A549 (cell line): ENCODE measurements at regions of chr7 and their contacts with region 1.

Region 1: GRCh38 chr7:22559829-22560489 is 60.0 kb upstream of the STEAP1B start:
- DNase-seq: peak; percentile 80 to 85
- ATAC-seq: peak; percentile 82 to 92
- H3K4me3 ChIP-seq: no peak overlapping the region
- H3K27ac ChIP-seq: peak overlapping the region in 1 of 2 experiments; percentile 74; a peak in 3 of 6 replicates
- H3K4me1 ChIP-seq: peaks cover 46% of the 10 kb centered on the region
- CTCF ChIP-seq: peak; percentile 99
- EP300 ChIP-seq: no peak
- POLR2A ChIP-seq: no peak
- RAD21 ChIP-seq: peak; percentile 90 to 99

Region 2: DNA sequence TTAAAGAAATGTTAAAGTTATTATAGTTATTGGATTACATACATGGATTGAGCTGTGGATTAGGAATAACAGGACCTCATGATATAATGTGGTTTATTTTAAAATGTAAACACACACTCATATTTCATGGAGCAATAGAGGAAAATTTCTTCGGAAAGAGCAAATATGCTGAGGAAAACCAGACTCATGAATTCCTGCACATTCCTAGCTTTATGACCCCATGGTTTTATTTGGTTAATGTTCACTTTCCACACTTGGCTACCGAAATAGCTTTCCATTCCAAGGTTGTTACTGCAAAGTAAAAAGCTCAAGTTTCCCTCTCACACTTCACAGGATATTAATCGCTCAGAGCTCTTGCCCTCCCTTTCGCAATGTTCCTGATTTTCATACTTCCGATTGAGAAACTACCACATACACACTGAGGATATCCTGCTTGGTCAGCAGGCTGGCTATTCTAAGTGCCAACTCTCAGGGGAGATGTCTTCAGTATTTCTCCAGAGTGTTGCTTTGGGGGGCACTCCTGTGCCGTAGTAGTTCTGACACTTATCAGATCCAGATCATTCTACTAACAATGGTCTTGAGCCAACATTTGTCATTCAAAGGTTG is 17.5 kb after region 1 on chr7:
- CTCF ChIA-PET with region 1: interaction called, 52 read pairs
- POLR2A ChIA-PET with region 1: interaction called, 5 read pairs
- DNase-seq: peak in 1 of 2 experiments; percentile 68
- ATAC-seq: peak; percentile 82 to 84
- H3K4me3 ChIP-seq: no peak overlapping the region
- H3K27ac ChIP-seq: peak overlapping the region; percentile 57 to 84
- H3K4me1 ChIP-seq: peaks cover 28% of the 10 kb centered on the region
- CTCF ChIP-seq: 0 out of 3 replicates have a peak, but pooled peaks have one; percentile 10
- EP300 ChIP-seq: peak; percentile 74 to 87; a peak in 3 of 5 replicates
- POLR2A ChIP-seq: no peak
- RAD21 ChIP-seq: peak in 1 of 2 experiments; percentile 41; a peak in 2 of 5 replicates

Region 3: GRCh38 chr7:22660732-22661131 is 100.8 kb after region 1 on chr7:
- CTCF ChIA-PET with region 1: interaction called, 10 read pairs
- POLR2A ChIA-PET with region 1: no interaction called
- DNase-seq: peak in 1 of 2 experiments; percentile 27
- ATAC-seq: peak; percentile 43 to 77; a peak in 4 of 6 replicates
- H3K4me3 ChIP-seq: no peak overlapping the region
- H3K27ac ChIP-seq: no peak overlapping the region
- H3K4me1 ChIP-seq: peaks cover 13% of the 10 kb centered on the region; the same call in 2 of the 3 replicates
- CTCF ChIP-seq: no peak
- EP300 ChIP-seq: no peak
- POLR2A ChIP-seq: no peak
- RAD21 ChIP-seq: peak in 1 of 2 experiments; percentile 2; a peak in 1 of 5 replicates

Region 4: DNA sequence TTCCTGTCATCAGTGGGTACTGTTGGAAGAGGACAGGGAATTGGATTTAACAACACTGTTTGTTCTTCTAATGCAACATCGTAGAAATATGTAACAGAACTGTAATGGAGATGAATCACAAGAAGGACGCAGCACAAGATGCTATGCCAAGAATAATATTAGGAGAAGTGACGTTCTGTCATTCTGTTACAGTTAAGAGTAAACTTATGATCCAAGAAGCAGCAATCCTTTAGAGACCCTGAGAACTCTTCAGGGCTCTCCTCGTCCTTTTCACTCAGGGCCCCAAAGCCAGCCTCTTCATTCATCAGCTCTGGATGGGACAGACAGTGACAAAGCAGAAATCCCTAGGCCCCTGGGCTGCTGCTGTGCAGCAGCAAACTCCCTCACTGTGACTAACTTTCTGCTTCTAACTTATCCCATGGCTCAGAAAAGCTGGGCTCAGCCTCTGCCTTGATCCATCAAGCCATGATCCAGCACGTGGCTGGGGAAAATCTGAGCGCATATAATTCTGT is 158.3 kb after region 1 on chr7:
- CTCF ChIA-PET with region 1: interaction called, 477 read pairs
- POLR2A ChIA-PET with region 1: interaction called, 3 read pairs
- DNase-seq: peak in 1 of 2 experiments; percentile 76
- ATAC-seq: peak; percentile 92 to 95
- H3K4me3 ChIP-seq: no peak overlapping the region
- H3K27ac ChIP-seq: peak overlapping the region; percentile 76 to 82
- H3K4me1 ChIP-seq: peaks cover 23% of the 10 kb centered on the region
- CTCF ChIP-seq: no peak
- EP300 ChIP-seq: peak; percentile 72 to 77; a peak in 2 of 5 replicates
- POLR2A ChIP-seq: no peak
- RAD21 ChIP-seq: no peak; a peak in 1 of 5 replicates

Region 5: GRCh38 chr7:22782616-22783232 is 222.8 kb after region 1 on chr7:
- CTCF ChIA-PET with region 1: interaction called, 32 read pairs
- POLR2A ChIA-PET with region 1: no interaction called
- DNase-seq: peak; percentile 65 to 73
- ATAC-seq: peak; percentile 92 to 98
- H3K4me3 ChIP-seq: no peak overlapping the region
- H3K27ac ChIP-seq: no peak overlapping the region
- H3K4me1 ChIP-seq: peaks cover 7% of the 10 kb centered on the region; the same call in 1 of the 3 replicates
- CTCF ChIP-seq: peak; percentile 66
- EP300 ChIP-seq: no peak
- POLR2A ChIP-seq: no peak
- RAD21 ChIP-seq: peak; percentile 59 to 68